ENCODE measurements at regions of chr12 and their contacts with region 1.

Region 1: DNA sequence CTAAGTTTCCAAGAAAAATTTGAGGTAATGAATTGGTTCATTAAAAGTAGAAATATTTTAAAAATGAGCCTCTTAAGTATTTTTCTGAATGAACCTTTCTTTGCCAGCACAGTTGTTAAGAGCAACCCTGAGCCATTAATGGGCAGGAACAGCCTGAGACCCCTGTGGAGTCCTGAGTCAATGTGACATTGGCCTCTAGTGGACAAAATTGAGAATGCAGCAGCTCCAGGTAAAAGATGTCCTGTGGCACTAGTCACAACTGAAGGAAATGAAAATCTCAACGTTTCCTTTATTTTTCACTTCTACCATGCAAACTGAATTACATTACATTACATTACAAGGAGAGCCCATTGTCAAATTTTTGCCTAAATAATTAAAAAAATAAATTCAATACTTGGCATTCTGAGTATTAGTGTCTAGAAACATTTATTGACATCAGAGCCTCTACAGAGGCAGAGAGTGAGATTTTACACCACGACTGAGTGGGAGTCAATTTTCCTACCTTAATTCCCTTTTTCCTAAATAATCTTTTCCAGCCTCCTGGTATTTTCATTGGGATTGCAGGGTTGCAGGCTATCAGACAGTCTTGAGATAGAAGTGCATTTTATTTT is 135.7 kb downstream of the PPM1H start:
- DNase-seq: peak; percentile 69
- ATAC-seq: peak; percentile 80
- H3K4me3 Mint-ChIP-seq: no peak overlapping the region
- H3K27ac Mint-ChIP-seq: no peak overlapping the region
- H3K4me1 Mint-ChIP-seq: no peaks in the 10 kb centered on the region
- H3K27me3 Mint-ChIP-seq: no peaks in the 10 kb centered on the region

Region 2: GRCh38 chr12:62581288-62582064 is 217.8 kb before region 1 on chr12:
- CTCF ChIA-PET with region 1: interaction called, 139 read pairs
- POLR2A ChIA-PET with region 1: no interaction called
- intact Hi-C with region 1: loop called (anchors 1 kb)
- DNase-seq: no peak
- ATAC-seq: no peak
- H3K4me3 Mint-ChIP-seq: no peak overlapping the region
- H3K27ac Mint-ChIP-seq: no peak overlapping the region
- H3K4me1 Mint-ChIP-seq: no peaks in the 10 kb centered on the region
- H3K27me3 Mint-ChIP-seq: no peaks in the 10 kb centered on the region

Region 3: GRCh38 chr12:62779488-62779887 is 19.7 kb before region 1 on chr12:
- CTCF ChIA-PET with region 1: interaction called, 12 read pairs
- POLR2A ChIA-PET with region 1: no interaction called
- intact Hi-C with region 1: no loop called
- DNase-seq: no peak
- ATAC-seq: no peak
- H3K4me3 Mint-ChIP-seq: no peak overlapping the region
- H3K27ac Mint-ChIP-seq: no peak overlapping the region
- H3K4me1 Mint-ChIP-seq: peaks cover 5% of the 10 kb centered on the region
- H3K27me3 Mint-ChIP-seq: no peaks in the 10 kb centered on the region

Measured in activated CD4-positive, alpha-beta T cell treated with anti-CD3 and anti-CD28 coated beads for 36 hours (primary cell).